ENCODE measurements at regions of chr7 and their contacts with region 1.

Region 1: DNA sequence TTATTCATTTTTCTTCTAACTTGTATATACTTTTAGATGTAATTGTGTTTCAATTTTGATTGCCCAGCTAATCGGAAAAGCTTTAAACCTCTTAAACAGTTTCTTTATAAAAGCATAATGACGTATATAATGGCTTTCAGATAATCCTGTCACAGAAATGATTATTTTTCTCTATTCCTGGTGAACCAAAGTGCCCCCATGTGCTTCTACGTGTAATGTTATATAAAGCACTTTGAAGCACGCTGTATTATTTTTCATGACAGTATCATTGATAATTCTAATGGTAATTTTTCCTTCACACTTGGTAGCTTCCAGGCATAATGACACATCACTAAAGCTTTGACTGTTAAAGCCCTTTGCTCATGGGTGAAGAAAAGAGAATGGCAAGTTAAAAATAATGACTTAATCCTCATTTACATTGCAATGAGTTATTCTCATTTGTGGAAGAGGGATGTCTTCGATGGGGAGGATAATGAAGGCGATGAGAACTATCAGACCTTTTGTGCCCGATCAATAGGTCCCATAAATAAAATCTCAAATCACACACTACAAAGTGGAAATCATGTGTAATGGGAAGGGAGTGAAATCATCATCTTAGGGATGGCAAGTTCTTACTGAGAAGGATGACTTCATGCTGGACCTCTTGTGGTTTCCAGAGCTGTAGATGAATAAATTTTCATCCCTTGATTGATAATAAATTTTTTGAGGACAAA is 460.1 kb downstream of the DPP6 start:
- DNase-seq: no peak

Region 2: GRCh38 chr7:154440651-154441050 is 71.6 kb before region 1 on chr7:
- intact Hi-C with region 1: no loop called
- DNase-seq: peak in 1 of 10 donors; percentile 44

Region 3: DNA sequence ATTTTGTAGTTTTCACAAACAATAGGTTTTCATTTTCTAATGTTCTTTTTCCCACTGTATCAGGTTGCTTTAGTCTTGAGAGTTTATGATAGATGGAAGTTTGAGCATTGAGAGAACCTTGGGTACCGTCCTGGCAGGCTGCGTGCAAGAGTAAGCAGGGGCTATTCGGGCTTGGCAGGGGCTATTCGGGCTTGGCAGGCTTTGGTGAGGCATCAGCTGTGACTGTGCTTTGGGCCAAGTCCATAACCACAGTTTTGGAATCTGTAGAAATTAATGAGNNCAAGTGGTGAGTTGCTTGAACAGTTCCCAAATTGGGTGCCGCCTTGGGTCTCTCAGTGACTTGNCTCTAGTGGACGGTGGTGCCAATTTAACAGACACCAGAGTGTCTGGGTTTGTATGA is 66.1 kb after region 1 on chr7:
- intact Hi-C with region 1: loop called (anchors 10 kb)
- DNase-seq: no peak

Region 4: GRCh38 chr7:154968336-154969001 is 456.2 kb after region 1 on chr7:
- intact Hi-C with region 1: no loop called
- DNase-seq: peak in 3 of 10 donors; percentile 35 to 88 (median 74)

Measured in posterior cingulate gyrus (tissue), 11 donors.